HEK293 (cell line): ENCODE measurements at regions of chr11 and their contacts with region 1.

Region 1: DNA sequence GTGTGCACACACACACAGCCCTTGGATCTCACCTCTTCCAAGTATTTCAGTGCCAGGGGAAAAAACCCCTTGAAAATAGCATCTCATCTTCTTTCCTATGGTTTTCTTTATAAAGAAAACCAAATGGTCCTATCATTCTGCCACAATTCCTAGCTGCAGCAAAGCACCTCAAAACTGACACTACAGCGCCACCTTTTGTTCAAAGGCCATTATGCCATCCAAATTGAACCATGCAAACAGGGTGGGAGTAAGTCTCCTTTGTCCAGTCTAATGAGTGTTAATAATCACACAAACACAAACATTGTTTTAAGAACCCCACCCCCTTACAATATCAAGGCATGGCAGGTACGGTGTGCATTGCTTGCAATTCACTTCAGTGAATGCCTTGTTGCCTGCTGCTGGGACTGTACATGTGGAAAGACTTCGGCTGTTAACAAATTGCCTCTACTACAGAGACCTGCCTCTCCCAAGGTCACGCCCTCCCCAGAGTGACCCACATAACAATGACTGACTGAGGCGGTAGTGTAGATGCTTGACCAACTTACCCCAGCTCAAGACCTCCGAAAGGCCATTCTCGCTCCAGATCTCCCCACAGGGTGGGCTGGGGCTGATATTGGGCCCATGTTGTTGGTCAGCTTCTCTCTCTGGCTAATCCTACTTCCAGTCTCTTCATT is 31.7 kb downstream of the FAM181B start:
- H3K4me3 ChIP-seq: no peak overlapping the region
- H3K27ac ChIP-seq: no peak overlapping the region
- H3K4me1 ChIP-seq: no peaks in the 10 kb centered on the region
- CTCF ChIP-seq: no peak

Region 2: DNA sequence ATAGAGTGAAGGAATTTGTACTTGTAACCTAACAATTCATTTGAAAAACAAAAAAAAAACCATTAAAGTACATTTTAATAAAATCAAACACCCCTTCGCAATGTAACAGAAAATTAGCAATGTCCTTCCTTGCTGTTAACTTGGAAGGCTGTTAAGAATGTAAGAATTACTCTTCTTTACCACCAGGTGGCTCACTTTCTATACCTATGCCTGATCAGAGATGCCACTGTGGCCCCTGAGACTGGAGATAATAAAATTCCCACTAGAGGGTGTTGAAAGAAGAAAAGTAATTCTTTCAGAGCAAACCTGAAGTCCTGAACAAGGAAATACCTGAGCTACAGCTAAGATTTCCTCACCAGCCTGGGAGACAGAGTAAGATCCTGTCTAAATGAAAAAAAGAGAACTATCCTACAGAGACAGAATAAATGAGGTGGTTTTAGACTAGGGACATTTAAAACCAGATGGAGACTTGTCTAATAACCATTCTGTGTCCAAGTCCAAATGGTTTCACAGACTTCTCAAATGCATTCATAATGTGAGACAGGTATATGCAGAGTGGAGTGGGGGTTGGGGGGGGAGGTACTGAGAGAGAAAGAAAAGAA is 1057.6 kb before region 1 on chr11:
- CTCF ChIA-PET with region 1: interaction called, 66 read pairs
- POLR2A ChIA-PET with region 1: no interaction called
- H3K4me3 ChIP-seq: no peak overlapping the region
- H3K27ac ChIP-seq: no peak overlapping the region
- H3K4me1 ChIP-seq: no peaks in the 10 kb centered on the region
- CTCF ChIP-seq: peak; percentile 42; the same call in 1 of the 2 replicates

Region 3: GRCh38 chr11:82682003-82682751 is 19.8 kb before region 1 on chr11:
- CTCF ChIA-PET with region 1: interaction called, 83 read pairs
- POLR2A ChIA-PET with region 1: no interaction called
- H3K4me3 ChIP-seq: no peak overlapping the region
- H3K27ac ChIP-seq: no peak overlapping the region
- H3K4me1 ChIP-seq: no peaks in the 10 kb centered on the region
- CTCF ChIP-seq: peak; percentile 81